Activated CD8-positive, alpha-beta memory T cell treated with anti-CD3 and anti-CD28 coated beads, Interleukin-2, amount 10 ng/mL, durations not matched to agents 7 days and 5 days (primary cell): ENCODE measurements at regions of chr9 and their contacts with region 1.

Region 1: DNA sequence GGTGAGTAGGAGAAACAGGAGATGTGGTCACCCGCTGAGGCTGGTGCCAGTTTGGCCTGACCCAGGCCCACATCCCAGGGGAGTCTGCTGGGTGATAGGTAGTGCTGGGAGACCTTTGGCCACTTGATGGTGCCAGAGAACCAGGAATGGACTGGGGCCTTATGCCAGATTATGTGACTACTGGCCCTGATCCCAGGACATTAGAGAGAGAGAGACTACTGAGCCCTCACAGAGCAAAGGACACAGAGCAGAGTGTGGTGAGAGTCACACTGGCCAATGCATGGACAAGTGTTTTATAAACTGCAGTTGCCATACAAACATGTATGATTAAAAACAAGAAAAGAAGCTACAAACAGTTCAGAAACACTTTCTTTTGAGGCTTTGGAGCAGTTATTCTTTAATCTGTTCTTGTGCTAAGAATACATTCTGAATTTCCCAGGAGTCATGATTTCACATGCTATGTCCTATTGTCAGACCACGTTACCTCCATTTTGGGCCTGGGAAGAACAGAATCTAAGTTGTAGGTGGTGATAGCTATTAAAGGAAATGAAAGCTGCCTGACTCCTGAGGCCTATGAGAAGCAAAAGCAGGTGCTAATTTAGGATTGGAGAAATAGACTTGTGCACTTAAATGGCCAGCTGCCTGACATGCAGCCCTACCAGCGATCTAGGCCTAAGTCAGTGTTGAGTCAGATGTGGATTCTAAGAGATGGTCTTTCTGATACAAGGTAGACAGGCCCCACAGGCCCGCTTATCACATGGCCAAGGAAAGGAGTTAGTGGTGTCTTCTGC is 32.6 kb upstream of the TMOD1 start:
- DNase-seq: peak; percentile 60
- ATAC-seq: peak; percentile 65
- H3K4me3 Mint-ChIP-seq: no peak overlapping the region
- H3K27ac Mint-ChIP-seq: no peak overlapping the region
- H3K4me1 Mint-ChIP-seq: no peaks in the 10 kb centered on the region
- H3K27me3 Mint-ChIP-seq: no peaks in the 10 kb centered on the region

Region 2: GRCh38 chr9:97479496-97480159 is 10.8 kb after region 1 on chr9:
- CTCF ChIA-PET with region 1: interaction called, 11 read pairs
- DNase-seq: no peak
- ATAC-seq: no peak
- H3K4me3 Mint-ChIP-seq: no peak overlapping the region
- H3K27ac Mint-ChIP-seq: no peak overlapping the region
- H3K4me1 Mint-ChIP-seq: no peaks in the 10 kb centered on the region
- H3K27me3 Mint-ChIP-seq: no peaks in the 10 kb centered on the region

Region 3: DNA sequence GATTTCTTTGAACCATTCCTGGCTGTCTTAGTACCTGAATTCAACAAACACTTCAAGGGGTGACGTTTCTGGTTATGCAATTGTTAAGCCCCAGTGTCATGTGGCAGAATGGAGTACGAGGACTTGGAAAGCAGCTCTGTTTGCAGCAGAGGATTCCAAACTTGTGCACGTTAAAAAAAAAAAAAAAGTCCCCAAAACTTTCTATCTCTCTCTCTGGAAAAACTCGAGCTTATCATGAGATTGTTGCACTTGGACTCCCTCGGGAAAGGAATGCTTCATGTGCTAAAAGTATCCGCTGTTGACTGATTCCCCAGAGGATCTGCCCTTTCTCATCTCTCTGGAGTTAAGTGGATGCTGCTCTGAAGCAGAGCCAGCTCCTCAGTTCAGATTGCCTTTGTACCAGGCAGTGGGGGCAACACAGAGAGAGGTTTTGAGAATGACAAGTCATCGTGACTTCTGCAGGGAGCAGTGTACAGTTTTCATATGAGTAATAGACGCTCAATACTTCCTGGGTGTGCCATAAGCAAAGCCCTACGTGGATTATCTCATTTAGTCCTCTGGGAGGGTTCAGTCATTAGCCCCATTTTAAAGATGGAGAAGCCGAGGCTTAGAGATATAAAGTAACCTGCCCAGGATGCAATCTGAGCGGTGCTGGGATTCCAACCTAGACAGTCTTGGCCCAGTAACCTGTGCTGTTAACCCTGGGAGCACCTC is 60.7 kb after region 1 on chr9:
- CTCF ChIA-PET with region 1: no interaction called
- DNase-seq: peak; percentile 63
- ATAC-seq: peak; percentile 93
- H3K4me3 Mint-ChIP-seq: no peak overlapping the region
- H3K27ac Mint-ChIP-seq: peak overlapping the region; percentile 59
- H3K4me1 Mint-ChIP-seq: peaks cover 19% of the 10 kb centered on the region
- H3K27me3 Mint-ChIP-seq: peaks cover 3% of the 10 kb centered on the region